Activated CD8-positive, alpha-beta T cell treated with anti-CD3 and anti-CD28 coated beads, Interleukin-2, amount 10 ng/mL, durations not matched to agents 7 days and 5 days (primary cell): ENCODE measurements at regions of chr4 and their contacts with region 1.

Region 1: GRCh38 chr4:70734168-70734954 is 12.6 kb downstream of the RUFY3 start:
- DNase-seq: peak; percentile 70
- ATAC-seq: peak; percentile 93
- H3K4me3 Mint-ChIP-seq: peak overlapping the region; percentile 79
- H3K27ac Mint-ChIP-seq: peak overlapping the region; percentile 91
- H3K4me1 Mint-ChIP-seq: peaks cover 52% of the 10 kb centered on the region
- H3K27me3 Mint-ChIP-seq: no peaks in the 10 kb centered on the region

Region 2: DNA sequence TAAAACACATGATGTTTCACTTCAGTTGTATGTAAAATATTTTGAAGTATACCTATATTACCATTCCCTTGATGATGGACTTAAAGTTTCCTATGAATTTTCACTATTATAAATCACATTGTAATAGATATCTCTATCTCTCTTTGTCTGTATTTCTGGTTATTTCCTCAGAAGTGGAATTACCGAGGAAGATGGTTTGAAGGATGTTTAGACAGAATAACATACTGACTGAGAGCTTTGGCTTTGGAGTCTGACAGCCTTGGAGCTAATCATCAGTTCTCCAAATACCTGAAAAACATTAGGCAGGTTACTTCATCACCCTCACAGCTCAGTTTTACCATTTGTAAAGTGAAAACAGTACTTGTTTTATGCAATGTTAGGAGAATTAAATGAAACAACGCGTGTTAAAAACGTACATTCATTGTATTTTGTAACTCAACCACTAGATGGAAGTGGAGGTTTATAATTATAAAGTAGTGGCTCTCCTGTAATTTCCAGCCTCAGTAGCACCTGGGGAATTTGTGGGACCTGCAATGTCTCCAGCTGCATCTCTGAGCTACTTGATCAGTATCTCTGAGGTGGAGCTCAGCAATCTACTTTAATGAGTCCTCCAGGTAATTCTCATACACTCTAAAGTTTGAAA is 82.4 kb before region 1 on chr4:
- CTCF ChIA-PET with region 1: interaction called, 14 read pairs
- POLR2A ChIA-PET with region 1: no interaction called
- DNase-seq: no peak
- ATAC-seq: peak; percentile 55
- H3K4me3 Mint-ChIP-seq: no peak overlapping the region
- H3K27ac Mint-ChIP-seq: no peak overlapping the region
- H3K4me1 Mint-ChIP-seq: peaks cover 8% of the 10 kb centered on the region
- H3K27me3 Mint-ChIP-seq: peaks cover 7% of the 10 kb centered on the region

Region 3: GRCh38 chr4:70687821-70688794 is 46.3 kb before region 1 on chr4 and contains the start of gene UTP3:
- CTCF ChIA-PET with region 1: interaction called, 51 read pairs
- POLR2A ChIA-PET with region 1: interaction called, 5 read pairs
- DNase-seq: peak; percentile 95
- ATAC-seq: peak; percentile 94
- H3K4me3 Mint-ChIP-seq: peak within 1 kb of the TSS; percentile 97
- H3K27ac Mint-ChIP-seq: peak within 1 kb of the TSS; percentile 92
- H3K4me1 Mint-ChIP-seq: peaks cover 30% of the 10 kb centered on the region
- H3K27me3 Mint-ChIP-seq: no peaks in the 10 kb centered on the region
- total RNA-seq, gene UTP3: 38.7 to 39.2 TPM

Region 4: GRCh38 chr4:70721747-70722146 is 12.6 kb before region 1 on chr4 and contains the start of gene RUFY3:
- CTCF ChIA-PET with region 1: interaction called, 35 read pairs
- POLR2A ChIA-PET with region 1: interaction called, 7 read pairs
- DNase-seq: no peak
- ATAC-seq: no peak
- H3K4me3 Mint-ChIP-seq: peak within 1 kb of the TSS; percentile 18
- H3K27ac Mint-ChIP-seq: peak within 1 kb of the TSS; percentile 60
- H3K4me1 Mint-ChIP-seq: peaks cover 21% of the 10 kb centered on the region
- H3K27me3 Mint-ChIP-seq: no peaks in the 10 kb centered on the region
- total RNA-seq, gene RUFY3: 35.1 to 43.2 TPM

Region 5: DNA sequence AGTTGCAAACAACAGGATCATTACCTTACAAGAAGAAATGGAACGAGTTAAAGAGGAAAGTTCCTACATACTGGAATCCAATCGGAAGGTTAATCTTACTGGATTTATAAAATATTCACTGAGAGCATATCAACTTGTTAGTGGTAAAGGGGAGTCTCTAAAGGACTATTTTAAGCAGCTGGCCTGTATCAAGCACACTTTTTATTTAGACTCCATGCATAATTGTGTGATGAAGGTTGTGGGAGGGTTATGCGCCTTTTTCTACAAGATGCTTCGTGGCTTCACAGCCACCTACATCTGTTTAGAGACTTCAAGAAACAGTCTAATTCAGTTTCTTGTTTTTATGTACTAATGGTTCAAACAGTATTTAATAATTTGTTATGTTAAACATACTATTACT is 48.7 kb after region 1 on chr4:
- CTCF ChIA-PET with region 1: no interaction called
- POLR2A ChIA-PET with region 1: no interaction called
- DNase-seq: no peak
- ATAC-seq: no peak
- H3K4me3 Mint-ChIP-seq: no peak overlapping the region
- H3K27ac Mint-ChIP-seq: no peak overlapping the region
- H3K4me1 Mint-ChIP-seq: no peaks in the 10 kb centered on the region
- H3K27me3 Mint-ChIP-seq: no peaks in the 10 kb centered on the region

Region 6: GRCh38 chr4:70801265-70801809 is 67.0 kb after region 1 on chr4:
- CTCF ChIA-PET with region 1: interaction called, 35 read pairs
- POLR2A ChIA-PET with region 1: no interaction called
- DNase-seq: peak; percentile 24
- ATAC-seq: peak; percentile 79
- H3K4me3 Mint-ChIP-seq: no peak overlapping the region
- H3K27ac Mint-ChIP-seq: peak overlapping the region; percentile 79
- H3K4me1 Mint-ChIP-seq: peaks cover 20% of the 10 kb centered on the region
- H3K27me3 Mint-ChIP-seq: no peaks in the 10 kb centered on the region

Region 7: GRCh38 chr4:70901984-70902576 is 167.7 kb after region 1 on chr4 and contains the start of gene MOB1B:
- CTCF ChIA-PET with region 1: interaction called, 12 read pairs
- POLR2A ChIA-PET with region 1: interaction called, 4 read pairs
- DNase-seq: peak; percentile 91
- ATAC-seq: peak; percentile 95
- H3K4me3 Mint-ChIP-seq: peak within 1 kb of the TSS; percentile 98
- H3K27ac Mint-ChIP-seq: peak within 1 kb of the TSS; percentile 94
- H3K4me1 Mint-ChIP-seq: peaks cover 23% of the 10 kb centered on the region
- H3K27me3 Mint-ChIP-seq: no peaks in the 10 kb centered on the region
- total RNA-seq, gene MOB1B: 15.3 to 16.4 TPM